ENCODE measurements at regions of chr11 and their contacts with region 1.

Region 1: GRCh38 chr11:125382314-125382791 is 113.7 kb downstream of the FEZ1 start:
- DNase-seq: no peak
- ATAC-seq: no peak
- H3K4me3 Mint-ChIP-seq: no peak overlapping the region
- H3K27ac Mint-ChIP-seq: no peak overlapping the region
- H3K4me1 Mint-ChIP-seq: peaks cover 20% of the 10 kb centered on the region
- H3K27me3 Mint-ChIP-seq: no peaks in the 10 kb centered on the region
- CTCF ChIP-seq: no peak

Region 2: DNA sequence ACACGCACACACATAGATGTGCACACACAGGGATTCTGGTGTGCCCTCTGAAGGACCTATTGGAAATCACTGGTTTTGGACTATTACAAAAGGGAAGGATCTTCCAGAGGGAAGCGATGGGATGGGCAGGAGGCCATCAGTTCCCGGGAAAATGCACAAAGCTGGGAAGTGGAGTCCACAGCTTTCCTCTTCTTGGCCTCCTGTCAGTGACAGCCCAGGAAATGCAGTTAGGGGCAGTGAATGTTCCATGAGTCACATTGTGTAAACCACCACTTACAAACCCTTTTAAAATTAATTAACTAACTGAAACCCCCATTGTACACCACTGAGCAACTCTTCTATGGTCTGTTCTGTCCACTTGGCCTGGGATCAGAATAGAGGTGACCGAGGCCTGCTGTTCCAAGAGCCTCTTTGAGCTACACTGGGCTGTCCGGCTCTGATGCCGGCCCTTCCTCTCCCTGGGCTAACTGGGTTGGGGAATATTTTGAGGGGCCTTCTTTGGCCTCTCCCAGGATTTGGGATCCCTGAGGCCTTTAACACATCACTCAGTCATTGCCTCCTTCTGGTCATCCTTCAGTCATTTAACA is 24.0 kb before region 1 on chr11:
- CTCF ChIA-PET with region 1: interaction called, 11 read pairs
- POLR2A ChIA-PET with region 1: no interaction called
- DNase-seq: no peak
- ATAC-seq: no peak
- H3K4me3 Mint-ChIP-seq: no peak overlapping the region
- H3K27ac Mint-ChIP-seq: no peak overlapping the region
- H3K4me1 Mint-ChIP-seq: no peaks in the 10 kb centered on the region; the same call in 1 of the 2 replicates
- H3K27me3 Mint-ChIP-seq: no peaks in the 10 kb centered on the region; the same call in 1 of the 2 replicates
- CTCF ChIP-seq: no peak

Region 3: DNA sequence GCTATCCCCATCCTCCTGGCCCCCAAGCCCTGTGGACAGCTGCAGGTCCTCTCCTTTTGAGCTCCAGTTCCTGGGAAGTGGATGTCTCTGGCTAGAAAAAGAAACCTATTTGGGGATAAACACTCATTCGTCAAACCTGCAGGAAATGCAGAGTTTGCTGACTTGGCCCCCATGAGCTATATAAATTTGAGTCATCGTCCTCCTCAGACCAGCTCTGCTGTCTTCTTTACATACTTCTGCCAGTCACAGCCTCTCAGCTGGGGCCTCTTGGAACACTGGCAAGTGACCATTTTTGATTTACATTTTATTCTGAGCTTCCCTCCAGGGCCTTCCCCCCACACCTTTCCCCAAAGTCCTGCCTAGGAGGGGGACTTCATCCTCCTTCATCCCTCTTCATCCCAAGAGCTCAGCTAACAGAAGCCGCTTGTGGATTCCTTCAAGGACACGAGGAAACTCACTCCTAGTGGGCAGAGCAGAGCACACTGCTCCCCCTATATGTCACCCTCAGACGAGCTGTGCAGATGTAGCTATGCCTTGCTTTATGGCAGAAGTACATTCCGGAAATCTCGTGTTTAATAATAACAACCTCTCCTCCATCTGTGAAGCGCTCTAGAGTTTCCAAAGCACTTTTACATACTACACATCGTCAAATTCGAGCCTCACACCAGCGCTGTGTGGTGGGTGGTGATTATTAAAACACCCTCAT is 18.1 kb before region 1 on chr11:
- CTCF ChIA-PET with region 1: interaction called, 11 read pairs
- POLR2A ChIA-PET with region 1: no interaction called
- DNase-seq: no peak
- ATAC-seq: peak; percentile 61
- H3K4me3 Mint-ChIP-seq: no peak overlapping the region
- H3K27ac Mint-ChIP-seq: no peak overlapping the region
- H3K4me1 Mint-ChIP-seq: peaks cover 14% of the 10 kb centered on the region
- H3K27me3 Mint-ChIP-seq: no peaks in the 10 kb centered on the region; the same call in 1 of the 2 replicates
- CTCF ChIP-seq: 0 out of 2 replicates have a peak, but pooled peaks have one; percentile 13

Region 4: DNA sequence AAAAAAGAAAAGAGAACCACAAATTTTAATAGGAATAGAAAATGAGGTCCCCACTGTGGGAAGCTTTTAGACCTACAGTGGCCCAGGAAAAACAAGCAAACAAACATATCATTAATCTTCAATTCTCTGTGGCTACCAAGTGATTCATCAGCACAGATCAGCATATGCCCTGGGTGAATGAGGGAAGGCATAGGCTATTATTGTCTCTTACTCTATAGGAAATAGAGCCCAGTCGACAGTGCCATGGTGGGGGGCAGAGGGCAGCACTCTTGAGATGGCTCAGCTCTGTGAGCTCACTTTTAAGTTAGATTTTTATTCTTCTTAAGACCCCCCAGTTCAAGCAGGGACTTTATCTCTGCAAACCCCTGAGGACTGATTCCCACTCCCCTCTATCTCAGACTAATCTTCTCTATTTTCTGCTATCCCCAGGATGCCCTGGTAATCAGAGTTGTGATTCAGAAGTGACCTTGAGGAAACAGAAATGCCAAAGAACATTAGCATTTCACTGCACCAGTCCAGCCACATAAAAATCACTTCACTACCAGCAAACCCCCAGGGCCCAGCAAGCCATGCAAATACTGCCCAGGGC is 123.2 kb after region 1 on chr11:
- CTCF ChIA-PET with region 1: no interaction called
- POLR2A ChIA-PET with region 1: no interaction called
- DNase-seq: no peak
- ATAC-seq: no peak; the same call in 1 of the 2 replicates
- H3K4me3 Mint-ChIP-seq: no peak overlapping the region
- H3K27ac Mint-ChIP-seq: no peak overlapping the region
- H3K4me1 Mint-ChIP-seq: peaks cover 28% of the 10 kb centered on the region
- H3K27me3 Mint-ChIP-seq: no peaks in the 10 kb centered on the region; the same call in none of the 2 replicates
- CTCF ChIP-seq: no peak

Measured in WTC11 (cell line).